ENCODE measurements at regions of chr12 and their contacts with region 1.

Region 1: DNA sequence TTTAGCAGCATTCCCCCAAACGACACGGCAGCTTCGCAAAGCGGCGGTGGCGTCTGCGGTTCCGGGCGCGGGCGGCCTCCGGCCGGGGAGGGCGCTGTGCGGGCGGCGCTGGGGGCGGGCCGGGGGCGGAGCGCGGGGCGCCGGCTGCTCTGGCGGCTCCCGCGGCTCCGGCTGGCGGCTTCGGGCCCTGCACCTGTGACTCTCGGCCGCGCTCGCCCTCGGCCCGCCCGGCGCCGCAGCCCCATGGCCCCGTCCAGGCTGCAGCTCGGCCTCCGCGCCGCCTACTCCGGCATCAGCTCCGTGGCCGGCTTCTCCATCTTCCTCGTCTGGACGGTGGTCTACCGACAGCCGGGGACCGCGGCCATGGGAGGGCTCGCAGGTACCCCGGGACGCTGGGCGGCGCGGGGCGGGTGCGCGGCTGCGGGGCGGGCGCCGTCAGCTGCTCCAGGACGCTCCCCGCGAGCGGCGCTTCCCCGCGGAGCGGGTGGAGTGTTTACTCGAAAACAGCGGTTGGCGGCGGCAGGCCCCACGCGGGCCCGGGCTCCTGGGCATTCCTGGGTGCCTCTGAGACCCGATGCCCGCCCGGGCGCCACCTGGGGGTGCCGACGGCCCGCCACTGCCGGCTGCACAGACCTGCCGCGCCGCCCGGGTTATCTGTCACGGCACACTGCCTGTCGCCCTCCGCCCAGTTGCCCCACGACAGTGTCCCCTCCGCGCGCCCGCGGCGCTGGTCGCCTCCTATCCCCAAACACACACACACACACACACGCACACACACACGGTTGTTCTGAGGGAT is at the start of gene SLC48A1:
- DNase-seq: peak; percentile 75
- H3K4me3 Mint-ChIP-seq: peak within 1 kb of the TSS; percentile 91
- H3K27ac Mint-ChIP-seq: peak within 1 kb of the TSS; percentile 36
- H3K4me1 Mint-ChIP-seq: peaks cover 45% of the 10 kb centered on the region
- H3K27me3 Mint-ChIP-seq: peaks cover 5% of the 10 kb centered on the region
- total RNA-seq, gene SLC48A1: 19.4 to 22.6 TPM

Region 2: DNA sequence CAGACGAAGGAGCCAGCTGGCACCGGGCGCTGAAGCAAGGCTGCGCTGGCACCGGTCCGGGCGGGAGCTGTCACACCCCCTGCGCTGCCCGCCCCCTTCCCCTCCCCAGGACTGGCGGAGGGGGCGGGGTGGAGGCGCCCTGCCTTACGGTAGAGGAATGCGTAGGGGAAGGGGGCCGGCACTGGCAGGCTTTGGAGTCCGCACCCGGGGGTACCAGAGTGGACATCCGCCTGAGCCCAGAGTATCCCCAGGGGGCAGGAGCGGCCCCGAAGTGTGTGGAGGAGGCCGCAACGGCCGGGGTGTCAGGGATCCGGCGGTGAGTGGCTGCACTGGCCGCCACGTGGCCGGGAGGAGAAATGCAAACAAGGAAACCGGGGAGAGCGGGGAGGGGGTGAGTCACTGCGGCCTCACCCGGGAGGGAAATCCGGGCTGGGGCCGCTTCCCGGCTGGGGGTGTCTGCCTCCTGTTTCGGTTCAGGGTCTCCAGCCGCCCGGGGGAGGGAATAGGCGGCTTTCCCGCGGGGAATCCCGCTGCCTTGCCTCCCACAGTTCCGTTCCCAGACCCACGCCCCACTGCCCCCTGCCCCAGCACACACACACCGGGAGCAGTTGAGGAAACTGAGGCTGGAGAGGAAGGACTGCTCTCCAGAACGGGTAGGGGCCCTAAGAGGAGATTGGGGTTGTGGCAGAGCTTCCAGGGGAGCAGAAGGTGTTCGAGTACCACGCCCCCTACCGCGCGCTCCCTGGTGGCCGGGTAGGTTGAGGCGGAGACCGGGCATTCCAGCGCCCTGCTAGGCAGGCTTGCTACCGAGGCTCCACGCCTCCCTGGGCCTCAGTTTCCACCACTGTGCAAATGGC is 14.2 kb before region 1 on chr12 and contains the start of gene RAPGEF3:
- CTCF ChIA-PET with region 1: interaction called, 11 read pairs
- POLR2A ChIA-PET with region 1: interaction called, 8 read pairs
- DNase-seq: peak; percentile 79
- H3K4me3 Mint-ChIP-seq: peak within 1 kb of the TSS; percentile 70
- H3K27ac Mint-ChIP-seq: no peak within 1 kb of the TSS
- H3K4me1 Mint-ChIP-seq: peaks cover 50% of the 10 kb centered on the region
- H3K27me3 Mint-ChIP-seq: peaks cover 2% of the 10 kb centered on the region
- total RNA-seq, gene RAPGEF3: 1.4 to 1.6 TPM